Activated T-helper 1 cell treated with anti-CD3 and anti-CD28 coated beads, Interleukin-12 subunit alpha, Interleukin-12 subunit beta, Interleukin-2, Interleukin-4 antibody, amounts not matched to agents 30 ng/mL and 10 ng/mL and 1 ng/mL, durations not matched to agents 14 hours and 24 hours and 36 hours (primary cell): ENCODE measurements at regions of chr19 and their contacts with region 1.

Region 1: GRCh38 chr19:54159352-54160181 is at the start of gene LENG1:
- DNase-seq: peak; percentile 99
- H3K4me3 Mint-ChIP-seq: peak within 1 kb of the TSS; percentile 95
- H3K27ac Mint-ChIP-seq: peak within 1 kb of the TSS; percentile 99
- H3K4me1 Mint-ChIP-seq: peaks cover 56% of the 10 kb centered on the region
- H3K27me3 Mint-ChIP-seq: peaks cover 4% of the 10 kb centered on the region
- total RNA-seq, gene LENG1: 5.8 and 6.6 TPM in 2 replicates

Region 2: DNA sequence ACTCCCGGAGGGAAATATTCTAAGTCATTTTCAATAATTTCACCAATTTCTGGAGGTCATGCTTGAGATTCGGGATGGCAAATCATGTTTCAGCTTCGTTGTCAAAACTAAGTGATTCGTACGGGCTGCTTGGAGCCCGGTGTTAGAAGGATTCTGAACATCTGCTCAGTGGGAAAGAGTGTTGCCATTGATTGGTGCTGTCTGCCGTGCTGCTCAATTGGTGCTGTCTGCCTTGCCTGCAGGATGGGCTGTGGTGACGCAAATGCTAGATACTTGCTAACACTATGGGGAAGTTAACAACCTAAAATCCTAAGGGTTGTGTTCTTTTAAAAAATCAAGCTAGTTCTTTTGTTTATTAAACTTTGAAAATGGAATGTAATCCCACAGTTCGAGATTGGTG is 214.1 kb before region 1 on chr19:
- intact Hi-C with region 1: no loop called
- DNase-seq: no peak
- H3K4me3 Mint-ChIP-seq: no peak overlapping the region
- H3K27ac Mint-ChIP-seq: no peak overlapping the region
- H3K4me1 Mint-ChIP-seq: no peaks in the 10 kb centered on the region
- H3K27me3 Mint-ChIP-seq: peaks cover 15% of the 10 kb centered on the region

Region 3: GRCh38 chr19:54102421-54103169 is 57.0 kb before region 1 on chr19 and contains the start of gene NDUFA3:
- intact Hi-C with region 1: loop called (anchors 1 kb)
- DNase-seq: peak; percentile 98
- H3K4me3 Mint-ChIP-seq: peak within 1 kb of the TSS; percentile 99
- H3K27ac Mint-ChIP-seq: peak within 1 kb of the TSS; percentile 87
- H3K4me1 Mint-ChIP-seq: peaks cover 17% of the 10 kb centered on the region
- H3K27me3 Mint-ChIP-seq: no peaks in the 10 kb centered on the region
- total RNA-seq, gene NDUFA3: 110 and 125 TPM in 2 replicates

Region 4: DNA sequence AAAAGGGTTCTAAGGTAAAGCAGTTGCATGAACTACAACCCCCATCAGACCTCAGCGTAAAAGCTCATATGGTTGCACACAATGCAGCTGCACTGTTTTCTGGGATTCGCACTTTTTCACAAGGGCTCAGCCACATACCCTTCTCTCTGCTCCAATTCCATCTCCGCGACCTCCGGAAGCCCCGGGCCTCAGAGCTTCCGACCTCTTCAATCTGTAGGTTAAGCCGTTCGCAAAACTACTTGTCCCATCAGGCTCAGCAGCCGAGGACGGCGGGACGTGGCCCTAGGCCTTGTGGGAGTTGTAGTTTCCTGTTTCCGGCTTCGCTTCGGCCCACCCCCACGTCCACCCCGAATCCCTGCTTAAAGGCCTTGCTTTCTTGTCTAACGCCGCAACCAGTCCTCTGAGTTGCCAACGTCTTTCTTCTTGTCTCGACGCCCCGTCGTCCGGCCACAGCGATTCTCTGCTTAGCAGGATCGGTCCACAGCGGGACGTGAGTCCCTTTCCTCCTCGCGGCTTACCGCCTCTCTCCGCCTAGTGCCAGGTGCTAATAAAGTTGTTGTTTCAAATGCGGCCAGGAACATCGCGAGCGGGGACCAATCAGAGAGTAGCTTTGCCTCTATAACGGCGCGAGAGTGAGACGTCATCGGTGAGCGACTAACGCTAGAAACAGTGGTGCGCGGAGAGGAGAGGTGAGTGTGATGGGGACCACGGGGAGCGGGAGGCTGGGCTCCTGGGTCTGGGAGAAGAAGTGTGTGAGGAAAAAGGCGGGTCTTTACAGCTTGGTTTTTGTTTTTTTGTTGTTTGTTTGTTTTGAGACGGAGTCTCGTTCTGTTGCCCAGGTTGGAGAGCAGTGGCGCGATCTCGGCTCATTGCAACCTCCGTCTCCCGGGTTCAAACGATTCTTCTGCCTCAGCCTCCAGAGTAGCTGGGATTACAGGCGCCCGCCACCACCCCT is 44.2 kb before region 1 on chr19 and contains the starts of genes PRPF31 and TFPT:
- intact Hi-C with region 1: loop called (anchors 1 kb)
- DNase-seq: peak; percentile 93
- H3K4me3 Mint-ChIP-seq: peak within 1 kb of the TSS; percentile 94
- H3K27ac Mint-ChIP-seq: peak within 1 kb of the TSS; percentile 91
- H3K4me1 Mint-ChIP-seq: peaks cover 32% of the 10 kb centered on the region
- H3K27me3 Mint-ChIP-seq: no peaks in the 10 kb centered on the region
- total RNA-seq, gene PRPF31: 110 and 118 TPM in 2 replicates
- total RNA-seq, gene TFPT: 31.1 and 33.4 TPM in 2 replicates

Region 5: DNA sequence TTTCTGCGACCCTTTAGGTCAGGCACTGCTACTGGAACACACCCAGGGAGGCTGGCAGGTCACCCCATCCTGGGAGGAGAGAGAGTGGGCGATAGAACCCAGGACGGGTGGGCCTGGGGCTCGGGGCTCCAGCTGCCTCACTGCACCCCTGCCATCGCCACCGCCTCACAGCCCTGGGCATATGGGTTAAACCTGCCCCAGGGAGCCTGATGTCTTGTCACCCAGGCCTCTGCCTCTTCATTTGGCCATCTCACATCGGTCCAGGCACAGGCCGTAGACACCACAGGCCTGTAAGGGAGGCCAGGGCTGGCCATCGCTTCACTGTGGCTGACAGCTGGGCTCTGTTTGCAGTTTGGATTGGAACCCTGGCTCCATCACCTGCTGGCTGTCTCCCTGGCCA is 33.9 kb before region 1 on chr19:
- intact Hi-C with region 1: no loop called
- DNase-seq: no peak
- H3K4me3 Mint-ChIP-seq: no peak overlapping the region
- H3K27ac Mint-ChIP-seq: no peak overlapping the region
- H3K4me1 Mint-ChIP-seq: no peaks in the 10 kb centered on the region
- H3K27me3 Mint-ChIP-seq: no peaks in the 10 kb centered on the region

Region 6: GRCh38 chr19:54203151-54203611 is 43.6 kb after region 1 on chr19:
- intact Hi-C with region 1: loop called (anchors 1 kb)
- DNase-seq: no peak
- H3K4me3 Mint-ChIP-seq: peak overlapping the region; percentile 95
- H3K27ac Mint-ChIP-seq: peak overlapping the region; percentile 99
- H3K4me1 Mint-ChIP-seq: peaks cover 75% of the 10 kb centered on the region
- H3K27me3 Mint-ChIP-seq: no peaks in the 10 kb centered on the region

Region 7: DNA sequence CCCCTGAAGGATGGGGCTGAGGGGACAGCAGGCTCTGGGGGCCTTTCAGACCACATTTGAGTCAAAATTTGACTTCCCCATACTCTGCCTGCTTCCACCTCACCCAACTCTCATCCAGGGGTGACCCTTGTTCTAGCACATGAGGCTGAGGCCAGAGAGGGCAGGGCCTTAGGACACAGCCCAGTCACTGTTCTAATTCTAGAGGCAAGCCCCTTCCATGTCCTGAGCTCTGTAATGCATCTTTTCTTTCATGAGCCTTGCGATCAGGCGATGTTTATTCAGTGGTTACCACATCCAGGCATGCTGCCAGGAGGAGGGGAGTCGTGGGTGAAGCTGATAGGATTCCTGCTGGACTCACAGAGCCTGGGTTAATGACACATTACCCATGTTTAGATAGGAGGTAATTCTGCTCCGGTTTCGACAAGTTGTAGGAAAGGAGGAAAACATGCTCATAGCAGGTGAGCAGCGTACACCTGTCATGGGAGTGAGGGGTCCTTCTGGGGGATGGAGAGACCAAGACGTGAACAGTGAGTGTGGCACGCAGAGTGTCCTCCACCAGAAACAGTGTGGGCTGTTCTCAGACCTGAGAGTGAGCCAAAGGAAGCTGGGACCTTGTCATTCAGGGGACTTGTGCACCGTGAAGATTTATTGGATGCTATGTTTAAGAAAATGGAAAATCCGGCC is 50.4 kb after region 1 on chr19:
- intact Hi-C with region 1: loop called (anchors 1 kb)
- DNase-seq: no peak
- H3K4me3 Mint-ChIP-seq: peak overlapping the region; percentile 3
- H3K27ac Mint-ChIP-seq: peak overlapping the region; percentile 79
- H3K4me1 Mint-ChIP-seq: peaks cover 61% of the 10 kb centered on the region
- H3K27me3 Mint-ChIP-seq: no peaks in the 10 kb centered on the region

Region 8: DNA sequence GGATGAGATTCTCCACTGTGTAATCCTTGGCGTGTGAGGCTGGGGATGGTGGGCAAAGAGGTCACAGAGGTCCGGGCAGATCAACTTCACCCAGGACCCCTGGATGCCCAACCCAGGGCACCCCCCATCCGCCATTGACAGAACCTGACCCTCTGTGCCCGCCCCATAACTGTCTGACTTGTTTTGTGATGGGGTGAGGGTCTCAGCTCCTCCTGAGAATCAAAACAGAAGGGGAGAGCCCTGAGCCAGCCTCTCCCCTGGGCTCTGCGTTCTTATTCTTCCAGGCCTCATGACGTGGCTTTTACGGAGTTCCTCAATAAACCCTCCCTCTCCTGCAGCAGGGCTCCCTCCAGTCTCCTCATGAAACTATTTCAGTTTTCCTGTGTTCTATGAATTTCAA is 79.5 kb after region 1 on chr19:
- intact Hi-C with region 1: no loop called
- DNase-seq: no peak
- H3K4me3 Mint-ChIP-seq: no peak overlapping the region
- H3K27ac Mint-ChIP-seq: no peak overlapping the region
- H3K4me1 Mint-ChIP-seq: no peaks in the 10 kb centered on the region
- H3K27me3 Mint-ChIP-seq: peaks cover 39% of the 10 kb centered on the region

Region 9: GRCh38 chr19:54448774-54449700 is 289.5 kb after region 1 on chr19 and contains the start of gene LENG8:
- intact Hi-C with region 1: loop called (anchors 2 kb)
- DNase-seq: peak; percentile 96
- H3K4me3 Mint-ChIP-seq: peak within 1 kb of the TSS; percentile 99
- H3K27ac Mint-ChIP-seq: peak within 1 kb of the TSS; percentile 98
- H3K4me1 Mint-ChIP-seq: peaks cover 36% of the 10 kb centered on the region
- H3K27me3 Mint-ChIP-seq: no peaks in the 10 kb centered on the region
- total RNA-seq, gene LENG8: 192 and 193 TPM in 2 replicates

Region 10: DNA sequence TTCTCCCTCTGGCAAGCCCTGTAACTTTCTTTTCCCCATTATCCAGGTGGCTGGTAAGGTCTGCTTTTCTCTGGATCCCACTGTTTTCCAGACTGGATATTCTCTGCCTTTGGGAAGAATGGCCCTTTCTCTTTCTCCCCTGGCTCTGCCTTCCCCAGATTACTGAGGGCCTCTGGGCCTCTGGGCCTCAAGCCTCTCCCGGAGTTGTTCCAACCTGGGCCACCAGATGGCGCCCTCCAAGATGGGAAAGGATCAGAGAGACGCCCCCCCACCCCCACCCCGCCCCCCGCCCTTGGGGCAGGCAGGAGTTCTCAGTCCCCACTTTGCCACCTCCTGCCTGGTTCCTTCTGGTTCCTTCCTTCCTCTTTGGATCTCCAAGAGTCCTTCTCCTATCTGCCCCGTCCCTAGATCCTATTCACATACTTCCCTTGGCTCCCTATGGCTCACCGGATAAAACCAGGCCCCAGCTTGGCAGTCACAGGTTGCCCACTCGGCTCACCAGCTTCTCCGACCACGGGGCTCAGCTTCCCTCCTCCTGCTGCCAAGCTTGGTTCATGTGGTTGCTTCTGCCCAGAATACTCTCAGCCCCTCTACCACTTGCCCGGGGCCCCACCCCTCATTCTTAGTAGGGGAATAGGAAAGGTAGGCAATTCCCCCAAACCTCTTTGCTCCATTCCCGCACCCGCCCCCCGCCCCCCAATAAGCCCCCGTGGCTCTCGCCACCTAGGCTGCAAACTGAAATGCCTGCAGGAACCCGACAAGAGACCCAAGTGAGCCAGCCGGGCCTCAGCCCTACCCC is 929.2 kb after region 1 on chr19:
- intact Hi-C with region 1: loop called (anchors 10 kb)
- DNase-seq: peak; percentile 62
- H3K4me3 Mint-ChIP-seq: peak overlapping the region; percentile 49
- H3K27ac Mint-ChIP-seq: no peak overlapping the region
- H3K4me1 Mint-ChIP-seq: peaks cover 16% of the 10 kb centered on the region
- H3K27me3 Mint-ChIP-seq: peaks cover 29% of the 10 kb centered on the region

Region 11: GRCh38 chr19:55166530-55167268 is 1007.1 kb after region 1 on chr19 and contains the start of gene DNAAF3:
- intact Hi-C with region 1: no loop called
- DNase-seq: peak; percentile 76
- H3K4me3 Mint-ChIP-seq: peak within 1 kb of the TSS; percentile 84
- H3K27ac Mint-ChIP-seq: peak within 1 kb of the TSS; percentile 32
- H3K4me1 Mint-ChIP-seq: peaks cover 12% of the 10 kb centered on the region
- H3K27me3 Mint-ChIP-seq: peaks cover 57% of the 10 kb centered on the region
- total RNA-seq, gene DNAAF3: 0.36 TPM in 1 of 2 replicates, not detected in the other